ENCODE measurements at regions of chr15 and their contacts with region 1.

Region 1: GRCh38 chr15:88115486-88116152 is 140.9 kb downstream of the NTRK3 start:
- DNase-seq: peak in 3 of 6 donors; percentile 14 to 33 (median 16)
- ATAC-seq: peak in 3 of 4 donors; percentile 64 to 72 (median 66)
- H3K4me3 ChIP-seq: no peak overlapping the region
- H3K27ac ChIP-seq: no peak overlapping the region
- H3K4me1 ChIP-seq: no peaks in the 10 kb centered on the region
- H3K27me3 ChIP-seq: no peaks in the 10 kb centered on the region
- CTCF ChIP-seq: no peak

Region 2: GRCh38 chr15:88042047-88042446 is 73.6 kb before region 1 on chr15:
- intact Hi-C with region 1: no loop called
- DNase-seq: no peak
- ATAC-seq: no peak
- H3K4me3 ChIP-seq: no peak overlapping the region
- H3K27ac ChIP-seq: no peak overlapping the region
- H3K4me1 ChIP-seq: no peaks in the 10 kb centered on the region
- H3K27me3 ChIP-seq: no peaks in the 10 kb centered on the region
- CTCF ChIP-seq: no peak

Region 3: GRCh38 chr15:88057836-88058235 is 57.8 kb before region 1 on chr15:
- intact Hi-C with region 1: loop called in 1 of 3 experiments (anchors 10 kb)
- DNase-seq: no peak
- ATAC-seq: no peak
- H3K4me3 ChIP-seq: no peak overlapping the region
- H3K27ac ChIP-seq: no peak overlapping the region
- H3K4me1 ChIP-seq: no peaks in the 10 kb centered on the region
- H3K27me3 ChIP-seq: no peaks in the 10 kb centered on the region
- CTCF ChIP-seq: no peak